Activated naive CD4-positive, alpha-beta T cell treated with anti-CD3 and anti-CD28 coated beads for 36 hours (primary cell): ENCODE measurements at regions of chr3 and their contacts with region 1.

Region 1: GRCh38 chr3:179322286-179323196 is at the start of gene ZNF639:
- DNase-seq: peak; percentile 78
- H3K4me3 Mint-ChIP-seq: peak within 1 kb of the TSS; percentile 89
- H3K27ac Mint-ChIP-seq: peak within 1 kb of the TSS; percentile 93
- H3K4me1 Mint-ChIP-seq: peaks cover 26% of the 10 kb centered on the region
- H3K27me3 Mint-ChIP-seq: no peaks in the 10 kb centered on the region
- total RNA-seq, gene ZNF639: 23.3 to 26.0 TPM

Region 2: DNA sequence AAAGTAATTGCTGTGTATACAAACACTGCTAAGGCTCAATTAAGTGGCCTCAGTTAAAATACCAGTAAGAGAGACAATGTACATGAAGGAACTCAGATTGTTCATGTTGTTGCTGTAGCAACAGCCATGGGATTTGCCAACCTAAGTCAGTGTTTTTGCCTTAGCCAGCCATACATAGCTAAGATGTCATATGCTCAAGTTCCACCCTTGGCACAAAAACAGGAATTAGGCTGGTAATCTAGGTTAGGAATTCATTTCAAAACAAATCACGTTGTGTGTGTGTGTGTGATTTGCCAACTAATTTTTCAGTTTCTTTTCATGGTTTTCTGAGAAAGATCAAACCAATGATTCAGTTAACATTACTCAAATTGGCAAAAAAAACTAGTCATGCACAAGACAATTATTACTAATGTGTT is 930.0 kb before region 1 on chr3:
- CTCF ChIA-PET with region 1: no interaction called
- intact Hi-C with region 1: no loop called
- DNase-seq: no peak
- H3K4me3 Mint-ChIP-seq: no peak overlapping the region
- H3K27ac Mint-ChIP-seq: no peak overlapping the region
- H3K4me1 Mint-ChIP-seq: peaks cover 2% of the 10 kb centered on the region
- H3K27me3 Mint-ChIP-seq: peaks cover 4% of the 10 kb centered on the region

Region 3: GRCh38 chr3:178436773-178437172 is 885.8 kb before region 1 on chr3:
- CTCF ChIA-PET with region 1: no interaction called
- intact Hi-C with region 1: loop called (anchors 1 kb)
- DNase-seq: no peak
- H3K4me3 Mint-ChIP-seq: no peak overlapping the region
- H3K27ac Mint-ChIP-seq: no peak overlapping the region
- H3K4me1 Mint-ChIP-seq: no peaks in the 10 kb centered on the region
- H3K27me3 Mint-ChIP-seq: no peaks in the 10 kb centered on the region

Region 4: GRCh38 chr3:179196098-179196497 is 126.4 kb before region 1 on chr3:
- CTCF ChIA-PET with region 1: no interaction called
- intact Hi-C with region 1: loop called (anchors 5 kb)
- DNase-seq: peak; percentile 33
- H3K4me3 Mint-ChIP-seq: no peak overlapping the region
- H3K27ac Mint-ChIP-seq: no peak overlapping the region
- H3K4me1 Mint-ChIP-seq: peaks cover 45% of the 10 kb centered on the region
- H3K27me3 Mint-ChIP-seq: no peaks in the 10 kb centered on the region

Region 5: DNA sequence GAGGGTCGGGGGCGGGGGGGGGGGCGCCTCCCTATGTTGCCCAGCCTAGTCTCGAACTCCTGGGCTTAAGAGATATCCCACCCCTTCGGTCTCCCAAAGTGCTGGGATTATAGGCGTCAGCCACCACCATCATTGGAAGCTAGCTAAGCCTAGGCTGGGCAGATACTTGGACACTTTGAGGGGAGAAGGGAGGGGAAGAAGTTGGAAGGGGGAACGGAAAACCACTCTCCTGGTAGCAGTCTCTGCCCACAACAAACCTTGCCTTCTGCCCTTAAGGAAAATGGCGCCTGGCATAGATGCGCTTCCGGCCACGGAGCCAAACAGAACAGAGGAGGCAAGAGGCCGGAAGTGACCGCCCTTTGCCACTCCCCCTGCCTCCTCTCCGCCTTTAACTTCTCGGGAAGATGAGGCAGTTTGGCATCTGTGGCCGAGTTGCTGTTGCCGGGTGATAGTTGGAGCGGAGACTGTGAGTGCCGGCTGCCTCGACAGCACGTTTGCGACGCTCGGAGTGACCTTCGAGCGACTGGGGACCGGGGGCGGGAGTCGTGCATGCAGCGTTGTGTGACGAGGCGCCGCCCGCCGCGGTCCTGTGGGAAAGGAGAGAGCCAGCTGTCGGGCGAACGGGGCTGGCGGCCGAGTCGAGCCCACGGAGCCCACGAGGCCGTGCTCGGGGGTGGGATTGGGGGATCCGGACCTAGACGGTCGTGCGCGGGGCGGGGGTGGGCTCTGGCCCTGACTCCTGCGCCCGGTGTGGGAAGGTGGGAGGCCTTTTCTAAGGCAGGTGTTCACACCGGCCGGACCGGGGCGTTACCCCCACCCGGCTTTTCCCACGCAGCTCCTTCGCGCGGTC is 25.0 kb after region 1 on chr3 and contains the start of gene MFN1:
- CTCF ChIA-PET with region 1: interaction called, 7 read pairs
- intact Hi-C with region 1: loop called (anchors 1 kb)
- DNase-seq: peak; percentile 94
- H3K4me3 Mint-ChIP-seq: peak within 1 kb of the TSS; percentile 91
- H3K27ac Mint-ChIP-seq: peak within 1 kb of the TSS; percentile 91
- H3K4me1 Mint-ChIP-seq: peaks cover 13% of the 10 kb centered on the region
- H3K27me3 Mint-ChIP-seq: no peaks in the 10 kb centered on the region
- total RNA-seq, gene MFN1: 23.0 to 23.1 TPM

Region 6: GRCh38 chr3:179451265-179452175 is 129.0 kb after region 1 on chr3 and contains the start of gene GNB4:
- CTCF ChIA-PET with region 1: no interaction called
- intact Hi-C with region 1: loop called (anchors 2 kb)
- DNase-seq: peak; percentile 49
- H3K4me3 Mint-ChIP-seq: peak within 1 kb of the TSS; percentile 70
- H3K27ac Mint-ChIP-seq: no peak within 1 kb of the TSS
- H3K4me1 Mint-ChIP-seq: peaks cover 13% of the 10 kb centered on the region
- H3K27me3 Mint-ChIP-seq: peaks cover 70% of the 10 kb centered on the region
- total RNA-seq, gene GNB4: 0.26 to 0.74 TPM

Region 7: GRCh38 chr3:179604321-179605078 is 282.0 kb after region 1 on chr3 and contains the starts of genes MRPL47 and NDUFB5:
- CTCF ChIA-PET with region 1: interaction called, 4 read pairs
- intact Hi-C with region 1: loop called (anchors 1 kb)
- DNase-seq: peak; percentile 96
- H3K4me3 Mint-ChIP-seq: peak within 1 kb of the TSS; percentile 100
- H3K27ac Mint-ChIP-seq: peak within 1 kb of the TSS; percentile 99
- H3K4me1 Mint-ChIP-seq: peaks cover 48% of the 10 kb centered on the region
- H3K27me3 Mint-ChIP-seq: no peaks in the 10 kb centered on the region
- total RNA-seq, gene MRPL47: 48.8 to 50.4 TPM
- total RNA-seq, gene NDUFB5: 148 to 151 TPM

Region 8: GRCh38 chr3:179653096-179653797 is 330.7 kb after region 1 on chr3:
- CTCF ChIA-PET with region 1: no interaction called
- intact Hi-C with region 1: loop called (anchors 2 kb)
- DNase-seq: peak; percentile 72
- H3K4me3 Mint-ChIP-seq: peak overlapping the region; percentile 85
- H3K27ac Mint-ChIP-seq: peak overlapping the region; percentile 67
- H3K4me1 Mint-ChIP-seq: peaks cover 17% of the 10 kb centered on the region
- H3K27me3 Mint-ChIP-seq: peaks cover 8% of the 10 kb centered on the region